ENCODE measurements at regions of chr12 and their contacts with region 1.

Region 1: GRCh38 chr12:20646239-20646827 is 48.8 kb upstream of the SLCO1C1 start:
- DNase-seq: no peak
- H3K4me3 Mint-ChIP-seq: no peak overlapping the region
- H3K27ac Mint-ChIP-seq: no peak overlapping the region
- H3K4me1 Mint-ChIP-seq: no peaks in the 10 kb centered on the region
- H3K27me3 Mint-ChIP-seq: no peaks in the 10 kb centered on the region
- CTCF ChIP-seq: peak; percentile 50

Region 2: GRCh38 chr12:20798561-20798960 is 152.2 kb after region 1 on chr12:
- CTCF ChIA-PET with region 1: no interaction called
- intact Hi-C with region 1: loop called (anchors 1 kb)
- DNase-seq: peak; percentile 12
- H3K4me3 Mint-ChIP-seq: no peak overlapping the region
- H3K27ac Mint-ChIP-seq: no peak overlapping the region
- H3K4me1 Mint-ChIP-seq: no peaks in the 10 kb centered on the region
- H3K27me3 Mint-ChIP-seq: no peaks in the 10 kb centered on the region
- CTCF ChIP-seq: no peak

Region 3: DNA sequence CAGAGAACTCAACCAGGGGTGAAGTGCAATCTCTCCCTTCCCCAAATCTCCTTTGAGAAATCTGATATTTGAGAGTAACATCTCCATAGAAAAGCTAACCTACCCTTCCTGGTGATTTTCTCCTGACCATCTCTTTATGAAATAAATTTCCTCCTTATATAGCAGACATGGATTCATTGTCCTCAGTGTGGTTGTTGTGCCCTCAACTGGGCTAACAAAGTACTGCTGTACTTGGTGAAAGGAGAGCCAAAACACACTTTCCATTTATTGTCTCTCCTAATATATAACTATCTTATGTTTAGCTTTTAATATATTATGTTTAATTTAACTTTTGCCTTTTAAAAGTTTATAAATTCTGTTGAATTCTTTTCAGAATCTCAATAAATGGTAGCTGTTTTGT is 419.5 kb after region 1 on chr12:
- CTCF ChIA-PET with region 1: no interaction called
- intact Hi-C with region 1: loop called (anchors 1 kb)
- DNase-seq: peak; percentile 16
- H3K4me3 Mint-ChIP-seq: no peak overlapping the region
- H3K27ac Mint-ChIP-seq: no peak overlapping the region
- H3K4me1 Mint-ChIP-seq: no peaks in the 10 kb centered on the region
- H3K27me3 Mint-ChIP-seq: no peaks in the 10 kb centered on the region
- CTCF ChIP-seq: no peak